Activated CD8-positive, alpha-beta memory T cell treated with anti-CD3 and anti-CD28 coated beads, Interleukin-2, amount 10 ng/mL, durations not matched to agents 7 days and 5 days (primary cell): ENCODE measurements at regions of chr22 and their contacts with region 1.

Region 1: DNA sequence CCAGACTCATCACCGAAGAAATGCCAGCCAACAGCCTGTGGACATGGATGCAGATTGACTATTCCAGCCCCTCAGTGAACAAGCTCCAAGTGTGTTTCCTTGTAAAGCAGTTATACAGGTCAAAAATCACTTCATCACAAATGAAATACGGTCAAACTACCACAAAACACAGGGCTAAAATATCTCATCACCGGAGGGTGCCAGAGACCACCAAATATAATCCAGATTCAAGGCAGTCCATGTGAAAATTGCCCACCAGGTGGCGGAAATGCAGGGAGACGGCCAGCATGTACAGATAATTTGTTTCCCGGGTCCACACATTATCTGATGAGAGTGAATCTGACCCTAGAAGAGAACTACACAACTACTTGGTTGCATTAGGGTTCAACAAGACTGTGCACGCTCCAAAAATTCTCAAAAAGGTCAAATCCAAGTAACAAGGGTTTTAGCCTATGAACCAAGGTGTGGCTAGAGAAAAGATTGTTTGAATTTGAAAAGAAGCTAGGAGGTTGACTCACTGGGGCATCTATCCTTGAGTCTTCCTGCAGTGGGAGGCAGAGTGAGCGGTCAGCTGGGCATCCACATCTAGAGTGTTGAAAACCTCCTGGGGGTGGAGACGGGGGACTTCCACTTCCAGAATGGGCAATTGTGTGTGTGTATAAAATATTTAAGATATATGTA is 71.7 kb downstream of the IGLL5 start:
- DNase-seq: peak; percentile 78
- ATAC-seq: peak; percentile 60
- H3K4me3 Mint-ChIP-seq: no peak overlapping the region
- H3K27ac Mint-ChIP-seq: no peak overlapping the region
- H3K4me1 Mint-ChIP-seq: peaks cover 2% of the 10 kb centered on the region
- H3K27me3 Mint-ChIP-seq: peaks cover 48% of the 10 kb centered on the region

Region 2: DNA sequence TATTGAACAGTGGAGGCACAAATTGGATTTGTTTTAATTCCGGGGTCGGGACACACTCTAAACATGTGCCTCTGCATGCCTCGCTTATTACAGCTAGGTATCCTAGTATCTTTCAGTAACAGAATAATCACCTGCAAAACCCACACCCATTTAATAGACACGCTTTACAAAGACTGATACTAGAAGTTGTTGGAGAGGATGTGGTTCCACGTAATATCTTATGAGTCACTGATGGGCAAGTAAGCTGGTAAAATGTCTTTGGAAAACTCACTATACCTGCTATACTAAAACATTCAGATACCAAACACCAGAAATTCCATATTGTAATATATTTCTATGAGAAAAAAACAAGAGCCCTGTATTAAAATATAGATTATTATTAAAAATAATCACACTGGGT is 230.9 kb before region 1 on chr22:
- CTCF ChIA-PET with region 1: no interaction called
- DNase-seq: no peak
- ATAC-seq: no peak
- H3K4me3 Mint-ChIP-seq: no peak overlapping the region
- H3K27ac Mint-ChIP-seq: no peak overlapping the region
- H3K4me1 Mint-ChIP-seq: peaks cover 24% of the 10 kb centered on the region
- H3K27me3 Mint-ChIP-seq: peaks cover 15% of the 10 kb centered on the region

Region 3: GRCh38 chr22:22753526-22754267 is 205.6 kb before region 1 on chr22:
- CTCF ChIA-PET with region 1: interaction called, 10 read pairs
- DNase-seq: peak; percentile 89
- ATAC-seq: peak; percentile 97
- H3K4me3 Mint-ChIP-seq: no peak overlapping the region
- H3K27ac Mint-ChIP-seq: no peak overlapping the region
- H3K4me1 Mint-ChIP-seq: peaks cover 20% of the 10 kb centered on the region
- H3K27me3 Mint-ChIP-seq: no peaks in the 10 kb centered on the region

Region 4: GRCh38 chr22:22810018-22810427 is 149.3 kb before region 1 on chr22:
- CTCF ChIA-PET with region 1: interaction called, 35 read pairs
- DNase-seq: peak; percentile 84
- ATAC-seq: peak; percentile 98
- H3K4me3 Mint-ChIP-seq: no peak overlapping the region
- H3K27ac Mint-ChIP-seq: no peak overlapping the region
- H3K4me1 Mint-ChIP-seq: peaks cover 3% of the 10 kb centered on the region
- H3K27me3 Mint-ChIP-seq: peaks cover 17% of the 10 kb centered on the region

Region 5: GRCh38 chr22:22893077-22893805 is 66.0 kb before region 1 on chr22:
- CTCF ChIA-PET with region 1: no interaction called
- DNase-seq: no peak
- ATAC-seq: no peak
- H3K4me3 Mint-ChIP-seq: no peak overlapping the region
- H3K27ac Mint-ChIP-seq: no peak overlapping the region
- H3K4me1 Mint-ChIP-seq: no peaks in the 10 kb centered on the region
- H3K27me3 Mint-ChIP-seq: peaks cover 65% of the 10 kb centered on the region

Region 6: GRCh38 chr22:22928666-22929380 is 30.5 kb before region 1 on chr22:
- CTCF ChIA-PET with region 1: interaction called, 11 read pairs
- DNase-seq: peak; percentile 87
- ATAC-seq: peak; percentile 97
- H3K4me3 Mint-ChIP-seq: no peak overlapping the region
- H3K27ac Mint-ChIP-seq: peak overlapping the region; percentile 74
- H3K4me1 Mint-ChIP-seq: peaks cover 32% of the 10 kb centered on the region
- H3K27me3 Mint-ChIP-seq: no peaks in the 10 kb centered on the region

Region 7: GRCh38 chr22:23128269-23129108 is 169.2 kb after region 1 on chr22:
- CTCF ChIA-PET with region 1: interaction called, 113 read pairs
- DNase-seq: peak; percentile 76
- ATAC-seq: peak; percentile 89
- H3K4me3 Mint-ChIP-seq: no peak overlapping the region
- H3K27ac Mint-ChIP-seq: no peak overlapping the region
- H3K4me1 Mint-ChIP-seq: no peaks in the 10 kb centered on the region
- H3K27me3 Mint-ChIP-seq: no peaks in the 10 kb centered on the region

Region 8: GRCh38 chr22:23385291-23386244 is 426.3 kb after region 1 on chr22:
- CTCF ChIA-PET with region 1: interaction called, 16 read pairs
- DNase-seq: peak; percentile 83
- ATAC-seq: peak; percentile 88
- H3K4me3 Mint-ChIP-seq: no peak overlapping the region
- H3K27ac Mint-ChIP-seq: no peak overlapping the region
- H3K4me1 Mint-ChIP-seq: no peaks in the 10 kb centered on the region
- H3K27me3 Mint-ChIP-seq: no peaks in the 10 kb centered on the region